Activated naive CD4-positive, alpha-beta T cell treated with anti-CD3 and anti-CD28 coated beads, Interleukin-2, amount 10 ng/mL, durations not matched to agents 7 days and 5 days (primary cell): ENCODE measurements at regions of chr1 and their contacts with region 1.

Region 1: GRCh38 chr1:36516372-36517325 is 33.9 kb upstream of the CSF3R start:
- DNase-seq: peak; percentile 58
- H3K4me3 Mint-ChIP-seq: no peak overlapping the region
- H3K27ac Mint-ChIP-seq: no peak overlapping the region
- H3K4me1 Mint-ChIP-seq: peaks cover 8% of the 10 kb centered on the region
- H3K27me3 Mint-ChIP-seq: peaks cover 20% of the 10 kb centered on the region

Region 2: GRCh38 chr1:36506276-36506920 is 10.3 kb before region 1 on chr1:
- CTCF ChIA-PET with region 1: interaction called, 31 read pairs
- DNase-seq: no peak
- H3K4me3 Mint-ChIP-seq: no peak overlapping the region
- H3K27ac Mint-ChIP-seq: peak overlapping the region; percentile 13
- H3K4me1 Mint-ChIP-seq: no peaks in the 10 kb centered on the region
- H3K27me3 Mint-ChIP-seq: peaks cover 34% of the 10 kb centered on the region

Region 3: DNA sequence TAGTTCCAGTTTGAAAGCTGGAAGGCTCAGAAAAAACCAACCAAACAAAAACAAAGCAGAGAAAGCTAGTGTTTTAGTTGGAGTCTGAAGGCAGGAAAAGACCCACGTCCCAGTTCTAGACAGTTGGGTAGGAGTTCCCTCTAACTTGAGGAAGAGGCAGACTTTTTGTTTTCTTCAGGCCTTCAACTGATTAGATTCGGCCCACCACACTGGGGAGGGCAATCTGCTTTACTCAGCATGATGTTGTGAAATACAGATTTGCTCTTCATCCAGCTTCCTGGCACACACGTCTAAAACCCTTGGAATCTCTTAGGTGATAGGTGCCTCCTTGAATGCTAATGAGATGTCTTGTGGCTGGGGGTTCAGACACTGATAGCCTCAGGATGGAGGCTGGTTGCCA is 15.2 kb after region 1 on chr1:
- CTCF ChIA-PET with region 1: interaction called, 11 read pairs
- DNase-seq: peak; percentile 14
- H3K4me3 Mint-ChIP-seq: no peak overlapping the region
- H3K27ac Mint-ChIP-seq: no peak overlapping the region
- H3K4me1 Mint-ChIP-seq: no peaks in the 10 kb centered on the region
- H3K27me3 Mint-ChIP-seq: peaks cover 30% of the 10 kb centered on the region

Region 4: DNA sequence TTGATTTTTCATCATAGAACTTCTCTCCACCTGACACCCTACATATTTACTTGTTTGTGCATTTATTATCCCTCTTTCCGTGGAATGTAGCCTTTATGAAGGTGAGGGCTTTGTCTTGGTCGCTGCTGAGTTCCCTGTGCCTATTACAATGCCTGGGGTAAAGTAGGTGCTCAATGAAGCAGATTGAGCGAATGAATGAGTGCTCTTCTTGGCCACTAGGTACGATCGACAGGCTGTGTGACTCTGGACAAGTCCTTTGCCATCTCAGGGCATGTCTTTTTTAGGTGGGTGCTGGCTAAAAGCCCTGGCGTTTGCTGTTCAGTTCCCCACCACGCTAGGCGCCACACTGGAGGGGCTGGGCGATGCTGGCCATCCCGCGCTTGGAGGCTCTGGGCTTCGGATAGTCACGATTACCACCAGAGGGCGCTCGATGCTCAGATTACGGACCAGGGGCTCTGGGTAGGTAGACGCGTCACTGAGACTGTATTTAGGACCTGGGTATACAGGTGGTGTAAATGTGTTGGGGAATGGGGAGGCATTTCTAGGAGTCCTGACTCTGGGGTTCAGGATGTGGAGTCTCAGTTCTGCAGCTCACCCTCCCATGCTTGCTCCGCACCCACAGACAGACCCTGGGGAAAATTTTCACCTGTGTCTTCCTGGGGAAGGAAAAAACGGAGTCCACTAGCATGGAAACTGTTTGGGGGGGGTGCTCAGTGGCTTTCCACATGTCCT is 37.1 kb after region 1 on chr1:
- CTCF ChIA-PET with region 1: interaction called, 11 read pairs
- DNase-seq: peak; percentile 80
- H3K4me3 Mint-ChIP-seq: no peak overlapping the region
- H3K27ac Mint-ChIP-seq: no peak overlapping the region
- H3K4me1 Mint-ChIP-seq: no peaks in the 10 kb centered on the region
- H3K27me3 Mint-ChIP-seq: peaks cover 54% of the 10 kb centered on the region

Region 5: DNA sequence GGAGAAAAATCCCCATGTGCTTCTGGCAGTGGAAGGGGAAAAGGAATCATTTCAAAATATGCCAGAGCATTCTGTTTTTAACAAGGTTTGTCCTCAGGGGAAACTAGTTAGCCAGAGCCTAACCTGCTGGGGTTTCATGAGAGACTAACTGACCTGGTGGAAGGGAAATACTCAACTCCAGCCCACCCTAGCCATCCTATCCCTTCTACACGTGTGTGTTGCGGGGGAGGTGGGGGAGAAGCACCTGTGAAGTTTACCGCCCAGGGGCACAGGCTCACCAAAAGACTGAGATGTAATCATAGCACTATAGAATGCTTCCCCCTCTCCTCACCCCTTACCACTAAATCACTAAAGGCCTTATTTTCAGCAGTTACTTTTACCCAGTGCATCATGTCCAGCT is 378.2 kb after region 1 on chr1:
- CTCF ChIA-PET with region 1: no interaction called
- DNase-seq: no peak
- H3K4me3 Mint-ChIP-seq: no peak overlapping the region
- H3K27ac Mint-ChIP-seq: no peak overlapping the region
- H3K4me1 Mint-ChIP-seq: no peaks in the 10 kb centered on the region
- H3K27me3 Mint-ChIP-seq: peaks cover 3% of the 10 kb centered on the region